Caco-2 (cell line): ENCODE measurements at regions of chr3 and their contacts with region 1.

Region 1: DNA sequence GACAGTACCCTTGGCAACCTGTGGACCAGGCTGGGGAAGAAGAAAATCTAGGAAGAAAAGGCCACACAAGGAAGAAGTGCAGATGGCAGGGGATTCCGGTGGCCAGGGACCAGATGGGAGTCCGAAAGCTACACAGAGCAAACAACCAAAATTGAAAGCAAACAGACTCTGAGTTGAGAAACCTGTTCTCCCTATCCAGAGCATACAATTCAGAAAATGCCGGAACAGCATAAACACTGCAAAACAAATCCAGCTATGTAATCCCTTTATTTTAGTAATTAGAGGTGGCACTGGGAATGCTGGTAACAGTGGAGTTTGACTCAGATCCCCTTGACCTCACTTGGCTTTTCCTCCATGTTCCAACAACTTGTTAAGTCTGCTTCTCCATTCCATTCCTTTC is 266.4 kb upstream of the CTDSPL start:
- DNase-seq: peak in 1 of 2 experiments; percentile 63
- H3K4me3 ChIP-seq: no peak overlapping the region
- H3K4me3 Mint-ChIP-seq: peak overlapping the region; percentile 31
- H3K27ac Mint-ChIP-seq: peak overlapping the region; percentile 88
- H3K4me1 ChIP-seq: peaks cover 9% of the 10 kb centered on the region
- H3K4me1 Mint-ChIP-seq: peaks cover 31% of the 10 kb centered on the region
- H3K27me3 ChIP-seq: no peaks in the 10 kb centered on the region
- H3K27me3 Mint-ChIP-seq: no peaks in the 10 kb centered on the region
- CTCF ChIP-seq: no peak

Region 2: GRCh38 chr3:37608061-37608702 is 12.9 kb after region 1 on chr3:
- CTCF ChIA-PET with region 1: no interaction called
- POLR2A ChIA-PET with region 1: no interaction called
- intact Hi-C with region 1: loop called (anchors 1 kb)
- DNase-seq: peak in 1 of 2 experiments; percentile 40
- H3K4me3 ChIP-seq: no peak overlapping the region
- H3K4me3 Mint-ChIP-seq: peak overlapping the region; percentile 19
- H3K27ac Mint-ChIP-seq: peak overlapping the region; percentile 73
- H3K4me1 ChIP-seq: peaks cover 32% of the 10 kb centered on the region
- H3K4me1 Mint-ChIP-seq: peaks cover 50% of the 10 kb centered on the region
- H3K27me3 ChIP-seq: no peaks in the 10 kb centered on the region
- H3K27me3 Mint-ChIP-seq: no peaks in the 10 kb centered on the region
- CTCF ChIP-seq: no peak